Colonic mucosa (tissue), 4 donors: ENCODE measurements at regions of chr18 and their contacts with region 1.

Region 1: DNA sequence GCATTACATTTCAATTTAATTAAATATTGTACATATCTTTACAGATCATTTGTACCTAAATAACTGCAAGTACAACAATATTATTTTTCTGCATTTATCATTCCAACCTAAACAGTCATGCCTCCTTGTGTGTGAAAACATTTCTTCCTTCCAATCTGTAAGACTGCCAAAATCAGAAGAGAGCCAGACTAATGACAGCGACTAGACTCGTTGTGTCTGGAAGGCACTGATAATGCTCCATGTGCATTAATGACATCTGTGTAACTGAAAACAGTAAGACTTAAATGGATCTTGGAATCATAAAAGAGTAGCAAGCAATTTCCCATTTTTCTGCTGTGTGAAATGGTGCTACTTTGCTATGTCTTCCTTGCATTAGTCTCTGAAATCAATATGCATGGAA is 278.0 kb upstream of the DSEL start:
- DNase-seq: no peak
- H3K4me3 ChIP-seq: no peak overlapping the region
- H3K27ac ChIP-seq: no peak overlapping the region
- H3K4me1 ChIP-seq: no peaks in the 10 kb centered on the region
- H3K27me3 ChIP-seq: no peaks in the 10 kb centered on the region
- CTCF ChIP-seq: no peak

Region 2: GRCh38 chr18:67854340-67854739 is 59.8 kb after region 1 on chr18:
- intact Hi-C with region 1: loop called (anchors 10 kb)
- DNase-seq: no peak
- H3K4me3 ChIP-seq: no peak overlapping the region
- H3K27ac ChIP-seq: no peak overlapping the region
- H3K4me1 ChIP-seq: no peaks in the 10 kb centered on the region
- H3K27me3 ChIP-seq: no peaks in the 10 kb centered on the region
- CTCF ChIP-seq: no peak